ENCODE measurements at regions of chr20 and their contacts with region 1.

Region 1: GRCh38 chr20:20824924-20825584 is 112.6 kb upstream of the RALGAPA2 start:
- DNase-seq: peak; percentile 54 to 75 (median 56)
- H3K4me3 ChIP-seq: peak overlapping the region in 1 of 3 experiments; percentile 38
- H3K4me3 Mint-ChIP-seq: peak overlapping the region; percentile 60 to 84
- H3K27ac ChIP-seq: no peak overlapping the region
- H3K27ac Mint-ChIP-seq: peak overlapping the region in 2 of 7 donors; percentile 28 to 64
- H3K4me1 ChIP-seq: peaks cover 36 to 37% of the 10 kb centered on the region in 2 donors
- H3K4me1 Mint-ChIP-seq: peaks cover 37% of the 10 kb centered on the region
- H3K27me3 ChIP-seq: peaks cover 0 to 11% of the 10 kb centered on the region in 2 donors
- H3K27me3 Mint-ChIP-seq: peaks cover 23 to 41% (median 39%) of the 10 kb centered on the region in 3 donors
- CTCF ChIP-seq: peak; percentile 87

Region 2: DNA sequence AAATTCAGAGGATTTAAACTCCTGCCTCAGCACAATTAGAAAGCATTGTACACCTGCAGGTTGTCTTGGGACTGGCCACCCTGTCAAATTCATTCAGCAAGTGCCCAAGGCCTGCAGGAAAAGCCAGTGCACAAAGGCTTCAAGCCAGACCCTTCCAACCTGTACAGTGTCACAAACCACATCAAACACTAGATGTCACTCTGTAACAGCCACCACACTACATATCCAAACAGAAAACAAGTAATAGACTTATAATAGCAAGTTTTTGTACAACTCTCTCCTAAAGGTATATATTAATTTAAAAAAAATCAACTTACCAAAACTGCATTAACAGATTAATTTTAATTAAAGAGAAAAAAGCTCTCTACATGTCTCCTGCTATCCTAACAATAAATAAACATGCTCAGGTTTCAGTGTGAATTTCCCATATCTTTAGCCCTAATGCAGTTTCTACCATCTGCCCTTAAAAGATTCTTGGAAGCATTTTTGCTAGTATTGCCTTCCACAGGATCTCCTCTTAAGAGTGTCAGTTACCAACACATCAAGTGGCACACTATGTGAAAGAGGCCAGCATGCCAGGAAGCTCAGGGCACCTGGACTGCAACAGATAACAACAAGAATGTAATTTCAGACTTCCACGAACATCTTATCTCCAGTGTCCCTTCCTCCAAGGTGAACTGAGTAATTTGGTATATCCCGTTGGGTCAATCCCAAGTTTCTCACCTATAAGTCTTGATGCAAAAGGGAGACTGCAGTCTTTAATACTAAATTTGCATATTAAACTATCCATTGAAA is 160.1 kb before region 1 on chr20:
- intact Hi-C with region 1: loop called (anchors 1 to 5 kb)
- DNase-seq: peak; percentile 13 to 39 (median 33)
- H3K4me3 ChIP-seq: no peak overlapping the region
- H3K4me3 Mint-ChIP-seq: no peak overlapping the region
- H3K27ac ChIP-seq: no peak overlapping the region
- H3K27ac Mint-ChIP-seq: no peak overlapping the region
- H3K4me1 ChIP-seq: peaks cover 36 to 46% of the 10 kb centered on the region in 2 donors
- H3K4me1 Mint-ChIP-seq: peaks cover 49% of the 10 kb centered on the region
- H3K27me3 ChIP-seq: no peaks in the 10 kb centered on the region
- H3K27me3 Mint-ChIP-seq: no peaks in the 10 kb centered on the region
- CTCF ChIP-seq: peak; percentile 69

Region 3: GRCh38 chr20:20712474-20713243 is 112.4 kb before region 1 on chr20 and contains the start of gene RALGAPA2:
- intact Hi-C with region 1: loop called in 1 of 2 experiments (anchors 10 kb)
- DNase-seq: peak; percentile 91 to 95 (median 95)
- H3K4me3 ChIP-seq: peak within 1 kb of the TSS; percentile 59 to 97 (median 90)
- H3K4me3 Mint-ChIP-seq: peak within 1 kb of the TSS; percentile 86 to 94
- H3K27ac ChIP-seq: peak within 1 kb of the TSS; percentile 88 to 91
- H3K27ac Mint-ChIP-seq: peak within 1 kb of the TSS; percentile 89 to 96 (median 94)
- H3K4me1 ChIP-seq: peaks cover 22 to 37% of the 10 kb centered on the region in 2 donors
- H3K4me1 Mint-ChIP-seq: peaks cover 41% of the 10 kb centered on the region
- H3K27me3 ChIP-seq: no peaks in the 10 kb centered on the region
- H3K27me3 Mint-ChIP-seq: peaks cover 0 to 3% (median 3%) of the 10 kb centered on the region in 3 donors
- CTCF ChIP-seq: no peak
- polyA plus RNA-seq, gene RALGAPA2: 6.2 to 13.0 (median 8.9) TPM

Region 4: GRCh38 chr20:20780127-20780824 is 44.8 kb before region 1 on chr20:
- intact Hi-C with region 1: loop called in 1 of 2 experiments (anchors 1 kb)
- DNase-seq: peak; percentile 91 to 97 (median 95)
- H3K4me3 ChIP-seq: peak overlapping the region in 1 of 3 experiments; percentile 36
- H3K4me3 Mint-ChIP-seq: peak overlapping the region in 1 of 2 donors; percentile 62
- H3K27ac ChIP-seq: peak overlapping the region; percentile 53 to 82
- H3K27ac Mint-ChIP-seq: peak overlapping the region; percentile 89 to 98 (median 97)
- H3K4me1 ChIP-seq: peaks cover 41 to 55% of the 10 kb centered on the region in 2 donors
- H3K4me1 Mint-ChIP-seq: peaks cover 41% of the 10 kb centered on the region
- H3K27me3 ChIP-seq: no peaks in the 10 kb centered on the region
- H3K27me3 Mint-ChIP-seq: no peaks in the 10 kb centered on the region
- CTCF ChIP-seq: no peak